Gastrocnemius medialis (tissue), 4 donors: ENCODE measurements at regions of chr16 and their contacts with region 1.

Region 1: DNA sequence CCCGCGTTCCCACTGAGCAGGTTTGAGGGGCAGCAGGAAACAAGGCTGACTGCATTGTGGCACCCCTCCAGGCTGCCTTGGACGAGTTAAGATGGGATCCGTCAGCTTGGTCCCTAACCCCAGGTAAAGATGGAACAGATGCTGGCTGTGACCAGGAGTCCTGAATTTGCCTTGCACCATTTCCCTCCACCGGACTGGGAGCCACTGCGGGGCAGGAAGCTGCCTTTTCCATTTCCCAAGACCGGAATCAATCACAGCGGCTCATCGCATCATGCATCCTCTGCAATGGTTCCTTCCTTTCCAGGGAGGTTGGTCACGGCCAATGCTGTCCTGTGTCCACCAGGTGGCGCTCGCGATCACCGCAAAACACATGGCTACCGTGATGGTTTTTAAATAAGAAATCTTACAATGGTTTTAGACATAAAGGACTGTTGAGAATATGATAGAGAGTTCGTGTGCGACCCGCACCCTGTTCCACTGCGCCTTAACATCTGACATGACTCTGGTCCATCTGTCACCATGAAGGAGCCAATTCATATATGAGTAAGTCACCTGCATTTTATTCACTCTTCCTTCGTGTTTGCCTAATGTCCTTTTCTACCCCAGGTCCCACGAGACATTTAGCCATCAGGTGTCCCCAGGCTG is 6.8 kb upstream of the MEAK7 start:
- DNase-seq: peak; percentile 55 to 69
- ATAC-seq: peak; percentile 68 to 77
- H3K4me3 ChIP-seq: no peak overlapping the region
- H3K27ac ChIP-seq: no peak overlapping the region
- H3K4me1 ChIP-seq: peaks cover 3 to 8% of the 10 kb centered on the region in 2 donors
- H3K27me3 ChIP-seq: no peaks in the 10 kb centered on the region
- CTCF ChIP-seq: peak; percentile 67 to 96 (median 92)
- POLR2A ChIP-seq: no peak

Region 2: GRCh38 chr16:84617791-84618580 is 106.7 kb after region 1 on chr16 and contains the start of gene COTL1:
- in situ Hi-C with region 1: loop called (anchors 5 to 10 kb)
- intact Hi-C with region 1: loop called (anchors 1 kb)
- DNase-seq: peak; percentile 84 to 89
- ATAC-seq: peak; percentile 80 to 87
- H3K4me3 ChIP-seq: peak within 1 kb of the TSS; percentile 56 to 81 (median 68)
- H3K27ac ChIP-seq: peak within 1 kb of the TSS in 3 of 4 donors; percentile 44 to 54 (median 52)
- H3K4me1 ChIP-seq: peaks cover 12 to 14% of the 10 kb centered on the region in 2 donors
- H3K27me3 ChIP-seq: peaks cover 25 to 30% (median 26%) of the 10 kb centered on the region in 3 donors
- CTCF ChIP-seq: no peak
- POLR2A ChIP-seq: peak; percentile 62 to 81
- total RNA-seq, gene COTL1: 2.8 to 8.7 (median 6.2) TPM

Region 3: GRCh38 chr16:84629580-84629979 is 118.3 kb after region 1 on chr16:
- in situ Hi-C with region 1: loop called (anchors 5 to 10 kb)
- intact Hi-C with region 1: no loop called
- DNase-seq: no peak
- ATAC-seq: no peak
- H3K4me3 ChIP-seq: no peak overlapping the region
- H3K27ac ChIP-seq: no peak overlapping the region
- H3K4me1 ChIP-seq: no peaks in the 10 kb centered on the region
- H3K27me3 ChIP-seq: no peaks in the 10 kb centered on the region
- CTCF ChIP-seq: no peak
- POLR2A ChIP-seq: no peak

Region 4: GRCh38 chr16:84672276-84673202 is 161.2 kb after region 1 on chr16:
- in situ Hi-C with region 1: no loop called
- intact Hi-C with region 1: no loop called
- DNase-seq: peak; percentile 40 to 63
- ATAC-seq: peak; percentile 78 to 93
- H3K4me3 ChIP-seq: no peak overlapping the region
- H3K27ac ChIP-seq: no peak overlapping the region
- H3K4me1 ChIP-seq: no peaks in the 10 kb centered on the region
- H3K27me3 ChIP-seq: no peaks in the 10 kb centered on the region
- CTCF ChIP-seq: peak; percentile 79 to 94 (median 90)
- POLR2A ChIP-seq: no peak

Region 5: DNA sequence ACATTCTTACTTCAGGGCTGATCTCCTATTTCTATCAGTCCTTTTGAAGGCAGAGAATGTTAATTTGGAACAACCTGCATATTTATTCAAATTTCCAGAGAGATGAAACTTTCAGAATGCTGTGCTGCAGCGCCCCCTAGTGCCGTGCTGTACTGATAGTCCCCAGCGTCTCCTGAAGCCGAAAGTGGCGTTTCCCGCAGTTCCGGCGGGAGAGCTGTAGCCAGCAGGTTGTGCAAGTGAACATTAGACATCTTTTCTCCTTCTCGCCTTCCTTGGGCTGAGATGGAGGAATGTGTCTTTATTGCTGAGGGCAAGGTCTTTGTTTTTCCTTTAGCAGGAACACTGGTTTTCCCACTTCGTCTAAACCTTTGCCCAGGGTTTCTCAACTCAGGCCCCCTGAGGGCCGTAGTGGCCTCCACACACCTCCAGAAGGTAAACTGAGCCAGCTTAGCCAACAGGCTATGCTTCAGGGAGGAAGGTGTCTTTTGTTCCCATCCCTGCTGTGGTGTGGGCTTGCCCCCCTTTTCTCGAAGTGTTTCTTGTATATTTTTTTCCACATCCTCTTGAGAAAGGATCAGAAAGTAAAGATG is 214.9 kb after region 1 on chr16:
- in situ Hi-C with region 1: loop called (anchors 5 to 10 kb)
- intact Hi-C with region 1: no loop called
- DNase-seq: peak; percentile 66 to 81
- ATAC-seq: peak; percentile 56 to 78
- H3K4me3 ChIP-seq: no peak overlapping the region
- H3K27ac ChIP-seq: peak overlapping the region in 1 of 4 donors; percentile 1
- H3K4me1 ChIP-seq: peaks cover 44 to 45% of the 10 kb centered on the region in 2 donors
- H3K27me3 ChIP-seq: no peaks in the 10 kb centered on the region
- CTCF ChIP-seq: peak; percentile 87 to 94 (median 90)
- POLR2A ChIP-seq: no peak

Region 6: GRCh38 chr16:84738255-84739038 is 227.1 kb after region 1 on chr16:
- in situ Hi-C with region 1: loop called in 1 of 4 experiments (anchors 10 kb)
- intact Hi-C with region 1: loop called (anchors 2 kb)
- DNase-seq: peak; percentile 49 to 65
- ATAC-seq: peak; percentile 64 to 79
- H3K4me3 ChIP-seq: no peak overlapping the region
- H3K27ac ChIP-seq: no peak overlapping the region
- H3K4me1 ChIP-seq: peaks cover 24 to 46% of the 10 kb centered on the region in 2 donors
- H3K27me3 ChIP-seq: no peaks in the 10 kb centered on the region
- CTCF ChIP-seq: peak; percentile 57 to 89 (median 82)
- POLR2A ChIP-seq: no peak

Region 7: GRCh38 chr16:84970447-84971127 is 459.3 kb after region 1 on chr16:
- in situ Hi-C with region 1: loop called in 2 of 4 experiments (anchors 25 kb)
- intact Hi-C with region 1: loop called (anchors 2 kb)
- DNase-seq: peak; percentile 65 to 74
- ATAC-seq: peak; percentile 49 to 78
- H3K4me3 ChIP-seq: no peak overlapping the region
- H3K27ac ChIP-seq: no peak overlapping the region
- H3K4me1 ChIP-seq: peaks cover 9 to 12% of the 10 kb centered on the region in 2 donors
- H3K27me3 ChIP-seq: no peaks in the 10 kb centered on the region
- CTCF ChIP-seq: peak; percentile 82 to 97 (median 96)
- POLR2A ChIP-seq: no peak